ENCODE measurements at regions of chr1 and their contacts with region 1.

Region 1: GRCh38 chr1:174097426-174097825 is 61.9 kb upstream of the RABGAP1L start:
- DNase-seq: no peak
- ATAC-seq: no peak
- H3K4me3 ChIP-seq: no peak overlapping the region
- H3K4me3 Mint-ChIP-seq: no peak overlapping the region
- H3K27ac ChIP-seq: no peak overlapping the region
- H3K27ac Mint-ChIP-seq: no peak overlapping the region
- H3K4me1 ChIP-seq: no peaks in the 10 kb centered on the region
- H3K4me1 Mint-ChIP-seq: peaks cover 7% of the 10 kb centered on the region
- H3K27me3 ChIP-seq: no peaks in the 10 kb centered on the region
- H3K27me3 Mint-ChIP-seq: no peaks in the 10 kb centered on the region
- CTCF ChIP-seq: no peak

Region 2: DNA sequence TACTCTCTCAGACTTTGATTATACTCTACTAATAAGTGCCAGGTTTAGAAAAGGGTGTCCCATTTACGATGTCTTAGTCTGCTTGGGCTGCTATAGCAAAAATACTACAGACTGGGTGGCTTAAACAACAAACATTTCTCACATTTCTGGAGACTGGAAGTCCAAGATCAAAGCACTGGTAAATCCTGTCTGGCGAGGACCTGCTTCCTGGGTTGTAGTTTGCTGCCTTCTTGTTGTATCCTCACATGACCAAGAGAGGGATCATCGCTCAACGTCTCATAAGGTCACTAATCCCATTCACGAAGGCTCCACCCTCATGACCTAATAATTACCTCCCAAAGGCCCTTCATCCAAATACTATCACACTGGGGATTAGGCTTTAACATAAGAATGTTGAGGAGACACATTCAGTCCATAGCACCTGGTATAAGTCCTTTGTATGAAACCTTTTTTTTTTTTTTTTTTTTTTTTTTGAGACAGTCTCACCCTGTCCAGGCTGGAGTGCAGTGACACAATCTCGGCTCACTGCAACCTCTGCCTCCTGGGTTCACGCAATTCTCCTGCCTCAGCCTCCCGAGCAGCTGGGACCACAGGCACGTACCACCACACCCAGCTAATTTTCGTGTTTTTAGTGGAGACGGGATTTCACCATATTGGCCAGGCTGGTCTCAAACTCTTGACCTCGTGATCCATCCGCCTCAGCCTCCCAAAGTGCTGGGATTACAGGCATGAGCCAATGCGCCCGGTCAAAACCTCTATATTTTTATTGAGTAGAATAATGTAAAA is 608.1 kb before region 1 on chr1:
- CTCF ChIA-PET with region 1: no interaction called
- POLR2A ChIA-PET with region 1: no interaction called
- intact Hi-C with region 1: no loop called
- DNase-seq: no peak
- ATAC-seq: no peak
- H3K4me3 ChIP-seq: no peak overlapping the region
- H3K4me3 Mint-ChIP-seq: no peak overlapping the region
- H3K27ac ChIP-seq: no peak overlapping the region
- H3K27ac Mint-ChIP-seq: no peak overlapping the region
- H3K4me1 ChIP-seq: no peaks in the 10 kb centered on the region
- H3K4me1 Mint-ChIP-seq: no peaks in the 10 kb centered on the region
- H3K27me3 ChIP-seq: no peaks in the 10 kb centered on the region
- H3K27me3 Mint-ChIP-seq: no peaks in the 10 kb centered on the region
- CTCF ChIP-seq: no peak

Region 3: DNA sequence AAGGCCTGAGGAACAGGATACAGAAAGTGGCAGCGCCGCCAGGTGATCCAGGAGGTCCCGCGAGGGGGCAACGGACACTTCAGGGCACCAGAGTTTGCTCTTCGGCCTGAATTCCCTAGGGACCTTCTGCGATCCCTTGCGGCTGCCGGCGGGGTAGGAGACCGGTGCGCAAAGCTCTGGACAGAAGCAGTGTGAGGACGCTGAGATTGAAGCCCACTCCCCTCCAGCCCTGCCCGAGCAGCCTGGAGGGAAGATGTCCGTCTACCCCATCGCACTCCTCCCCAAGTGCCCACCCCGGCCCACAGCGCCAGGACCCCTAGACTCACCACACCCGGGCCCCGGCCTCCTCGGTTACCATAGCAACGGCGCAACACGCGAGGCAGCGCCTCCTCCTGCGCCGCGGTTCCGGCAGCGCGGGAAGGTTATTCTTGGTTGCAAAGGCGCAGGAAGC is 427.9 kb before region 1 on chr1 and contains the start of gene ANKRD45:
- CTCF ChIA-PET with region 1: no interaction called
- POLR2A ChIA-PET with region 1: no interaction called
- intact Hi-C with region 1: no loop called
- DNase-seq: peak; percentile 3
- ATAC-seq: no peak
- H3K4me3 ChIP-seq: no peak within 1 kb of the TSS
- H3K4me3 Mint-ChIP-seq: peak within 1 kb of the TSS; percentile 24
- H3K27ac ChIP-seq: no peak within 1 kb of the TSS
- H3K27ac Mint-ChIP-seq: no peak within 1 kb of the TSS
- H3K4me1 ChIP-seq: peaks cover 6 to 7% of the 10 kb centered on the region in 2 donors
- H3K4me1 Mint-ChIP-seq: peaks cover 13% of the 10 kb centered on the region
- H3K27me3 ChIP-seq: peaks cover 0 to 23% (median 15%) of the 10 kb centered on the region in 4 experiments
- H3K27me3 Mint-ChIP-seq: peaks cover 46% of the 10 kb centered on the region
- CTCF ChIP-seq: no peak
- total RNA-seq, gene ANKRD45: not detected in 2 replicates

Region 4: GRCh38 chr1:174743654-174744561 is 646.5 kb after region 1 on chr1:
- CTCF ChIA-PET with region 1: no interaction called
- POLR2A ChIA-PET with region 1: no interaction called
- intact Hi-C with region 1: loop called (anchors 10 kb)
- DNase-seq: peak; percentile 65
- ATAC-seq: peak; percentile 57
- H3K4me3 ChIP-seq: no peak overlapping the region
- H3K4me3 Mint-ChIP-seq: no peak overlapping the region
- H3K27ac ChIP-seq: no peak overlapping the region
- H3K27ac Mint-ChIP-seq: no peak overlapping the region
- H3K4me1 ChIP-seq: peaks cover 0 to 10% of the 10 kb centered on the region in 2 donors
- H3K4me1 Mint-ChIP-seq: peaks cover 36% of the 10 kb centered on the region
- H3K27me3 ChIP-seq: no peaks in the 10 kb centered on the region
- H3K27me3 Mint-ChIP-seq: no peaks in the 10 kb centered on the region
- CTCF ChIP-seq: peak; percentile 84